GM23248 (cell line): ENCODE measurements at regions of chr16 and their contacts with region 1.

Region 1: DNA sequence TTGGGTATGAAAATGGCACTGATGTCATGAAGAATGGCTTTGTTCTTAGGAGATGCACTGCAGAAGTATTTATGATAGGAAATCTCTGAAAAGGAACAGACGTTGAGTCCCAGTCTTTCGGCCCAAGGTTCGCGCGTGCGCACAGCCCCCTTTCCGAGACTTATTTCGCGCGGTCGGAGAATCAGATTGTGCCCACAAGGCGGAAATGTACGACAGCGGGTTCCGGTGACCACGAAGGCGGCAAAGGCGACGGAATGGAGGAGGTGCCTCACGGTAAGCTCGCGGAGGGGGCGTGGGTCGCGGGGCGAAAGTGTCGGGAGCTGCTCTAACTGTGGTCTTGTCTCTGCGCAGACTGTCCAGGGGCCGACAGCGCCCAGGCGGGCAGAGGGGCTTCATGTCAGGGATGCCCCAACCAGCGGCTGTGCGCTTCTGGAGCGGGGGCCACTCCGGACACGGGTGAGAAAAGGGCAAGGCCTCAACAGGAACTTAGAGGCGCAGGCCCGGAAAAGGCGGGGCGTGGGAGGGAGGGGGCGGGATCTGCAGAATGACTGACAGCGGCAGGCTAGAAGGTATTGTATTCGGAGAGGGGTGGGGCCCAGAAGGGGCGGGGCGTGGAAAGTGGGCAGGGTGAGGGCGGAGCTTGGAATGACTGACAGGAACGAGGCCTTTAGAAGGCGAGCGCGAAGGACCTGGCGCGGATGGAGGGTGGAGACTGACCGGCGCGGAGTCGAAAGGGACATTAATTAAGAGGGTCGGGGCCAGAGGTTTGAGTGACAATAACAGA is at the start of gene NUBP1:
- DNase-seq: peak; percentile 97
- H3K4me3 ChIP-seq: peak within 1 kb of the TSS; percentile 85
- H3K27ac ChIP-seq: peak within 1 kb of the TSS; percentile 96
- H3K4me1 ChIP-seq: peaks cover 17% of the 10 kb centered on the region; the same call in 1 of the 2 replicates
- H3K27me3 ChIP-seq: no peaks in the 10 kb centered on the region
- total RNA-seq, gene NUBP1: 16.3 and 19.1 TPM in 2 replicates

Region 2: DNA sequence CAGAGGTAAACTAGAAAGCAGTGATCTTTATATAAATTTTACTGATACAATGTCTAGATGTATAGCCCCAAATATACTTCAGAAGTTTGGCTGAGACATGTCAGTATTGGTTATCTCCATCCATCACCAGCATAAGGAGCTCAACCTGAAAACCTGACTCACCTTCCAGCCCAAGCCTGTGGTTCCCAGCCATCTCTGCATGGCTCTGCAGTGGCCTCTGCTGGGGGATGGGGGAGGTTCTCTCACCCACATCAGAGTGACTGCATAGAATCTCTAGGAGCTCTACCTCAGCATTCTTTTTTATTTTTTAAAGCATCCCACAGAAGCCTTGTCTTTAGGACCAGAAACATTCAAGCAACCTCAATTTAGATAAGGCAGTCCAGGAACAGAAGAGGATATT is 1807.4 kb before region 1 on chr16:
- in situ Hi-C with region 1: loop called (anchors 25 kb)
- DNase-seq: peak; percentile 75
- H3K4me3 ChIP-seq: no peak overlapping the region
- H3K27ac ChIP-seq: no peak overlapping the region; the same call in 1 of the 2 replicates
- H3K4me1 ChIP-seq: peaks cover 4% of the 10 kb centered on the region
- H3K27me3 ChIP-seq: no peaks in the 10 kb centered on the region

Region 3: DNA sequence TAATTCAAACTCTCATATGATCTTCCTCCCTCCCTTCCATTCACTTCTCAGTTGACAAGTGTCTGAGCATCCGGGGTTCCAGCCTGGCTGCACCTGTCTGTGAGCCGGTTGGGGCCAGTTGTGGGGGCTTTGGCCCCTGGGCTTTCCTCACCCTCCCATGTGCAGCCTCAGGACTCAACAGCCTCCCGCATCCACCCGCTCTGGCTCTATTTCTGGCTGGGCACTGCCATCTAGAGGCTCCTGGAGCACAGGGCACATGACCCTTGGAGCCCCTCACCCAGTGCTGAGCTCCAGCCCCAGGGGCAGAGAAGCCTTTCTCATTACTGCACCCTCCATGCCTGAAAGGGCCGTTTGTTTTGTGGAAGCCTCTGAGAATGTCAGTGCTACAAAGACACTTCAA is 1609.1 kb before region 1 on chr16:
- in situ Hi-C with region 1: loop called (anchors 25 kb)
- DNase-seq: peak; percentile 62
- H3K4me3 ChIP-seq: no peak overlapping the region
- H3K27ac ChIP-seq: no peak overlapping the region
- H3K4me1 ChIP-seq: no peaks in the 10 kb centered on the region
- H3K27me3 ChIP-seq: no peaks in the 10 kb centered on the region